ENCODE measurements at regions of chr16 and their contacts with region 1.

Region 1: DNA sequence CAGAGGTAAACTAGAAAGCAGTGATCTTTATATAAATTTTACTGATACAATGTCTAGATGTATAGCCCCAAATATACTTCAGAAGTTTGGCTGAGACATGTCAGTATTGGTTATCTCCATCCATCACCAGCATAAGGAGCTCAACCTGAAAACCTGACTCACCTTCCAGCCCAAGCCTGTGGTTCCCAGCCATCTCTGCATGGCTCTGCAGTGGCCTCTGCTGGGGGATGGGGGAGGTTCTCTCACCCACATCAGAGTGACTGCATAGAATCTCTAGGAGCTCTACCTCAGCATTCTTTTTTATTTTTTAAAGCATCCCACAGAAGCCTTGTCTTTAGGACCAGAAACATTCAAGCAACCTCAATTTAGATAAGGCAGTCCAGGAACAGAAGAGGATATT is 27.3 kb downstream of the USP7 start:
- DNase-seq: peak; percentile 91
- ATAC-seq: peak; percentile 100
- H3K4me3 Mint-ChIP-seq: no peak overlapping the region
- H3K27ac Mint-ChIP-seq: peak overlapping the region; percentile 66
- H3K4me1 Mint-ChIP-seq: peaks cover 79% of the 10 kb centered on the region
- H3K27me3 Mint-ChIP-seq: no peaks in the 10 kb centered on the region
- CTCF ChIP-seq: peak; percentile 79

Region 2: DNA sequence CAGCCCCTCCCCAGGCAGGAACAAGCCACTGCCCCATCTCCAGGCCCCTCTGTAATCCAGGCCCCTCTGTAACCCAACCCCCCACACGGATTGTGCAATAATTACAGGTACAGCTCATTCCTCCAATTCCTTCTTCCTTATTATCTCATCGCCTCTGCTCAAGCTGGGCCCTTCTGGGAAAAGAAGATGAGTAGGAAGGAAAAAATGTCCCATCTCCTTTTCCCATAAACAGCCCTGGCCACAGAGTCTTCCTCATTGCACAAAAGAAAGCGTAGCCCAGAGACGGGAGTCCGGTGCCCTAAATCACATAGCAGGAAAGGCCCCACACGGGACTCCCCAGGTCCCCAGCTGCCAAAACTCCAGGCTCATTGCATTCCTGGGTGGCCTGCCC is 57.9 kb before region 1 on chr16:
- CTCF ChIA-PET with region 1: interaction called, 20 read pairs
- POLR2A ChIA-PET with region 1: no interaction called
- intact Hi-C with region 1: no loop called
- DNase-seq: no peak
- ATAC-seq: no peak
- H3K4me3 Mint-ChIP-seq: no peak overlapping the region
- H3K27ac Mint-ChIP-seq: no peak overlapping the region
- H3K4me1 Mint-ChIP-seq: peaks cover 16% of the 10 kb centered on the region
- H3K27me3 Mint-ChIP-seq: no peaks in the 10 kb centered on the region
- CTCF ChIP-seq: no peak

Region 3: GRCh38 chr16:8899709-8900317 is 36.6 kb before region 1 on chr16:
- CTCF ChIA-PET with region 1: interaction called, 29 read pairs
- POLR2A ChIA-PET with region 1: no interaction called
- intact Hi-C with region 1: no loop called
- DNase-seq: no peak
- ATAC-seq: no peak
- H3K4me3 Mint-ChIP-seq: no peak overlapping the region
- H3K27ac Mint-ChIP-seq: peak overlapping the region; percentile 59
- H3K4me1 Mint-ChIP-seq: no peaks in the 10 kb centered on the region
- H3K27me3 Mint-ChIP-seq: no peaks in the 10 kb centered on the region
- CTCF ChIP-seq: no peak

Region 4: DNA sequence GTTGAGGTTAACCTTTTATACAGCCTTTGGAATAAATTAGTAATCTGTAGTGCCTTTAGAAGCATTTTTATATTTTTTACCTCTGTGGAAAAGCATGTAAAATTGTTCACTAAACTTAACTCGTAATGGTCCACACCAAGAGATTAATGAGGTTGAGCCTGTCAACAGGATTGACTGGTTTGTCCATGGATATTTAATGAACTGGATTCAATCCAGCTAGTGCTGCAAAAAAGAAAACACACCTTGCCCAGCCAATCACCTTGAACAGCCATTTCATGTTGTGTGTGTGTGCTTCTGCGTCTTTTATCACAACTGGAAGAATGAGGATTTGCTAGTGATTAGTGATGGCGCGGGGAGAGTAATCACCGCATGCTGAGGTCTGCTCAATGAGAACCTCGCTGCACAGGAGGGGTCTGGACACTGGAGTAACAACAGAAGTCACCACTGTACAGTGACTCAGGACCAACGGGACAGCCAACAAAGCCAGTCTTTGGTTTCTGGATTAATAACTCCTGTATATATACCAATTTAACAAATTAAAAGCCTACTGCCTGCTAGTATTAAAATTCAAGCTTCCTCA is 20.6 kb before region 1 on chr16:
- CTCF ChIA-PET with region 1: interaction called, 23 read pairs
- POLR2A ChIA-PET with region 1: no interaction called
- intact Hi-C with region 1: no loop called
- DNase-seq: no peak
- ATAC-seq: no peak
- H3K4me3 Mint-ChIP-seq: no peak overlapping the region
- H3K27ac Mint-ChIP-seq: no peak overlapping the region
- H3K4me1 Mint-ChIP-seq: peaks cover 42% of the 10 kb centered on the region
- H3K27me3 Mint-ChIP-seq: no peaks in the 10 kb centered on the region
- CTCF ChIP-seq: no peak

Region 5: DNA sequence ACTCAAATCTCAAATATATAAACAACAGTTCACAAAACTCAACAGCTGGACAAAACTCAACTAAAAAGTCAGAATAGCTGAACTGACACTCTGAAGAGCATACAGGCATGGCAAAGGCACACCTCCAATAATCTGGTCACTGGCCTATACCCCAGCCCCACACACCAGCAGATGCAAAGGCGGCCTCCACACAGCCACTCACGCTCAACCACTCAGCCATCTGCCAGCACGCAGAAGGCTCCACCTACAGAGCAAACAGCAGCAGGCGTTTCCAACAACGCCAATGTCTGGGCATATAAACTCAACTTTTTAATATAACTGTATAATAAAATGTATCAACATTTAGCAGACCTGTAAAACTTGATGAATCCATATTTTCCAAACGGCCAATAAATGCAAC is 10.1 kb after region 1 on chr16:
- CTCF ChIA-PET with region 1: interaction called, 72 read pairs
- POLR2A ChIA-PET with region 1: interaction called, 5 read pairs
- intact Hi-C with region 1: no loop called
- DNase-seq: no peak
- ATAC-seq: no peak
- H3K4me3 Mint-ChIP-seq: no peak overlapping the region
- H3K27ac Mint-ChIP-seq: no peak overlapping the region
- H3K4me1 Mint-ChIP-seq: peaks cover 91% of the 10 kb centered on the region
- H3K27me3 Mint-ChIP-seq: no peaks in the 10 kb centered on the region
- CTCF ChIP-seq: no peak

Region 6: GRCh38 chr16:9008601-9009260 is 72.3 kb after region 1 on chr16:
- CTCF ChIA-PET with region 1: interaction called, 34 read pairs
- POLR2A ChIA-PET with region 1: no interaction called
- intact Hi-C with region 1: no loop called
- DNase-seq: peak; percentile 82
- ATAC-seq: peak; percentile 97
- H3K4me3 Mint-ChIP-seq: no peak overlapping the region
- H3K27ac Mint-ChIP-seq: no peak overlapping the region
- H3K4me1 Mint-ChIP-seq: peaks cover 5% of the 10 kb centered on the region
- H3K27me3 Mint-ChIP-seq: peaks cover 20% of the 10 kb centered on the region
- CTCF ChIP-seq: peak; percentile 83